ENCODE measurements at regions of chr2 and their contacts with region 1.

Region 1: DNA sequence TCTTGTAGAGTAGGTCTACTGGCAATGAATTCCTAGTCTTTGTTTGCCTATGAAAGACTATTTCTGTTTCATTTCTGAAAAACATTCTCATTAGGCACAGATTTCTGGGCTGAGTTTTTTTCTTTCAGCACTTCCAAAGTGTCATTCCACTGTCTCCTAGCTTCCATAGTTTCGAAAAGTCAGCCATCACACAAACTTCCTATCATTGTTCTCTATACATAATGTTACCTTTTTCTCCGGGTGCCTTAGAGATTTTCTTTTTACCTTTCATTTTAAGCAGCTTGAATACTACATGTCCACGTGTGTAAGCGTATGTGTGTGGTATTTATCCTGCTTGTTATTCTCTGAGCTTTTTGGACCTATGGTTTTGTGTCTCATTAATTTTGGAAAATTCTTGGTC is 55.7 kb downstream of the OLA1 start:
- DNase-seq: no peak
- H3K4me3 ChIP-seq: no peak overlapping the region
- H3K27ac ChIP-seq: no peak overlapping the region
- H3K4me1 ChIP-seq: no peaks in the 10 kb centered on the region
- H3K27me3 ChIP-seq: no peaks in the 10 kb centered on the region
- CTCF ChIP-seq: no peak
- EP300 ChIP-seq: no peak
- POLR2A ChIP-seq: no peak

Region 2: GRCh38 chr2:174210862-174211261 is 18.2 kb after region 1 on chr2:
- in situ Hi-C with region 1: no loop called
- intact Hi-C with region 1: loop called (anchors 2 kb)
- DNase-seq: no peak
- H3K4me3 ChIP-seq: no peak overlapping the region
- H3K27ac ChIP-seq: no peak overlapping the region
- H3K4me1 ChIP-seq: no peaks in the 10 kb centered on the region
- H3K27me3 ChIP-seq: no peaks in the 10 kb centered on the region
- CTCF ChIP-seq: no peak
- EP300 ChIP-seq: no peak
- POLR2A ChIP-seq: no peak

Region 3: DNA sequence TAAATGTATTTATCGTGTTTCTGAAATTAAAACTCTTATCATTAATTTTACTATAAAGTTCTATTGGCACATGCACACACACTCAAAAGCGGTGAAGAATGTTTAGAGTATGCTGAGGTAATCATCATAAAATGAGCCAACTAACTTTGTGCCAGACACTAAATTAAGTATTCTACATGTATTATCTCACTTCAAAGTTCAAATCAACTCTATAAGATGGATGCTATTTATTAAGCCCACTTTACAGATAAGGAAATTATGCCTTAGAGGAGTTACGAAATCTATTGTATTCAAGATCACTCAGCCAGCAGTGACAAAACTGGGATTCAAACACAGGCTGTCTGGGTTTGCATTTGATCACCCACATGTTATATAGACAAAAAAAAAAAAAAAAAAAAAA is 30.7 kb after region 1 on chr2:
- in situ Hi-C with region 1: no loop called
- intact Hi-C with region 1: no loop called
- DNase-seq: no peak
- H3K4me3 ChIP-seq: no peak overlapping the region
- H3K27ac ChIP-seq: no peak overlapping the region
- H3K4me1 ChIP-seq: no peaks in the 10 kb centered on the region
- H3K27me3 ChIP-seq: no peaks in the 10 kb centered on the region
- CTCF ChIP-seq: no peak
- EP300 ChIP-seq: no peak
- POLR2A ChIP-seq: no peak

Region 4: GRCh38 chr2:174682578-174683391 is 490.1 kb after region 1 on chr2:
- in situ Hi-C with region 1: no loop called
- intact Hi-C with region 1: no loop called
- DNase-seq: peak; percentile 75
- H3K4me3 ChIP-seq: peak overlapping the region; percentile 72 to 89 (median 81)
- H3K27ac ChIP-seq: peak overlapping the region; percentile 84 to 88 (median 86)
- H3K4me1 ChIP-seq: peaks cover 3 to 17% (median 13%) of the 10 kb centered on the region in 4 donors
- H3K27me3 ChIP-seq: peaks cover 12% of the 10 kb centered on the region
- CTCF ChIP-seq: no peak
- EP300 ChIP-seq: no peak
- POLR2A ChIP-seq: no peak

Measured in transverse colon (tissue), 4 donors.